ENCODE measurements at regions of chr15 and their contacts with region 1.

Region 1: GRCh38 chr15:44663409-44664308 is at the start of gene SPG11:
- DNase-seq: peak; percentile 99
- H3K4me3 ChIP-seq: peak within 1 kb of the TSS; percentile 76 to 95 (median 86)
- H3K27ac ChIP-seq: peak within 1 kb of the TSS; percentile 73
- H3K4me1 ChIP-seq: peaks cover 9% of the 10 kb centered on the region
- H3K27me3 ChIP-seq: peaks cover 0 to 1% of the 10 kb centered on the region in 2 experiments
- CTCF ChIP-seq: peak; percentile 86 to 92
- POLR2A ChIP-seq: peak; percentile 97
- total RNA-seq, gene SPG11: 44.7 and 53.5 TPM in 2 replicates

Region 2: GRCh38 chr15:43991206-43991605 is 672.5 kb before region 1 on chr15:
- CTCF ChIA-PET with region 1: no interaction called
- POLR2A ChIA-PET with region 1: no interaction called
- dilution Hi-C with region 1: no loop called
- intact Hi-C with region 1: no loop called
- DNase-seq: no peak
- H3K4me3 ChIP-seq: no peak overlapping the region
- H3K27ac ChIP-seq: no peak overlapping the region
- H3K4me1 ChIP-seq: no peaks in the 10 kb centered on the region
- H3K27me3 ChIP-seq: no peaks in the 10 kb centered on the region
- CTCF ChIP-seq: no peak
- POLR2A ChIP-seq: no peak

Region 3: DNA sequence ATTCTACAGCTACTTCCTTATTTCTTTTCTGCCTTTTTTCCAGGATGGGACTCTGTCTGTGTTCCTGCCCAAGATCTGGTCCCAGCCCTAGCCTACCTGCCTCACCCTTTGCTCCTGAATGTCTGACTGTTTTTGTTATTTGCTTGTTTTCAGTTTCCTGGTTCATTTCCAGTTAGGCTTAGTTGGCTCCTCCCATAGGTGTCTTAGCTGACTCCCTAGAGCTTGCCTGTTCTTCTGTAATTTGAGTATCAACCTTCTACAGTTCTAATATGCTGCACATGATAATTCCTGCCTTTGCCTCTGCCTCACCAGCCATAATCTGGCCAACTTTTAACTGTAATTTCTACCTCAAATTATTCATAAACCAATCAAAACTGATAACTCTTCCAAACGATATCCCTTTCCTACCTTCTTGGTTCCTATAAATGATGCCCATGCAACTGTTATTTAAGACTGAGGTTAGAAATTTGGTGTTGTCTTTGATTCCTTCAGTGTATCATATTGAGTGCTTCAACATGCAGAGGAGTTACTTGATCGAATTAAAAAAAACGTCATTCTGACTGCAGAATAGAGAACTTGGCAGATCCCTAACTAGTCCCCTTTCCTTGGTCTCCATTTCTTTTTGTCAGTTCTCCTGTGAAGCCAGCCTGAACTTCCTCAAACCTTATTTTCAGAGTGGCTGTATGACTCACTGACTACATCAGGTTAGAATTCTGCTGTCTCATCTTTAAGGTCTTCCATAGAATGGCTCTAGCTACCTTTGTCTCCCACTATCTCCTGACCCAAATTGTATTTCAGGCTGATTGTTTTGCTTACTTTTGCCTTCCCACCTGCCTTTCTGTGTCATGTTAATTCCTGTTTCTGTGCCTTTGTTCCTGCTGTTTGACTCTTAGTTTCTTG is 366.8 kb before region 1 on chr15:
- CTCF ChIA-PET with region 1: no interaction called
- POLR2A ChIA-PET with region 1: no interaction called
- dilution Hi-C with region 1: no loop called
- intact Hi-C with region 1: no loop called
- DNase-seq: peak; percentile 18
- H3K4me3 ChIP-seq: no peak overlapping the region
- H3K27ac ChIP-seq: no peak overlapping the region
- H3K4me1 ChIP-seq: peaks cover 5% of the 10 kb centered on the region
- H3K27me3 ChIP-seq: no peaks in the 10 kb centered on the region
- CTCF ChIP-seq: no peak
- POLR2A ChIP-seq: no peak

Region 4: GRCh38 chr15:44584162-44584749 is 79.4 kb before region 1 on chr15:
- CTCF ChIA-PET with region 1: interaction called, 3 read pairs
- POLR2A ChIA-PET with region 1: no interaction called
- dilution Hi-C with region 1: no loop called
- intact Hi-C with region 1: loop called (anchors 2 kb)
- DNase-seq: peak; percentile 49
- H3K4me3 ChIP-seq: no peak overlapping the region
- H3K27ac ChIP-seq: no peak overlapping the region
- H3K4me1 ChIP-seq: no peaks in the 10 kb centered on the region
- H3K27me3 ChIP-seq: no peaks in the 10 kb centered on the region
- CTCF ChIP-seq: peak; percentile 52 to 72
- POLR2A ChIP-seq: no peak

Region 5: GRCh38 chr15:44647036-44647435 is 16.6 kb before region 1 on chr15:
- CTCF ChIA-PET with region 1: interaction called, 10 read pairs
- POLR2A ChIA-PET with region 1: no interaction called
- dilution Hi-C with region 1: no loop called
- intact Hi-C with region 1: no loop called
- DNase-seq: no peak
- H3K4me3 ChIP-seq: no peak overlapping the region
- H3K27ac ChIP-seq: no peak overlapping the region
- H3K4me1 ChIP-seq: no peaks in the 10 kb centered on the region
- H3K27me3 ChIP-seq: no peaks in the 10 kb centered on the region
- CTCF ChIP-seq: no peak
- POLR2A ChIP-seq: no peak

Region 6: DNA sequence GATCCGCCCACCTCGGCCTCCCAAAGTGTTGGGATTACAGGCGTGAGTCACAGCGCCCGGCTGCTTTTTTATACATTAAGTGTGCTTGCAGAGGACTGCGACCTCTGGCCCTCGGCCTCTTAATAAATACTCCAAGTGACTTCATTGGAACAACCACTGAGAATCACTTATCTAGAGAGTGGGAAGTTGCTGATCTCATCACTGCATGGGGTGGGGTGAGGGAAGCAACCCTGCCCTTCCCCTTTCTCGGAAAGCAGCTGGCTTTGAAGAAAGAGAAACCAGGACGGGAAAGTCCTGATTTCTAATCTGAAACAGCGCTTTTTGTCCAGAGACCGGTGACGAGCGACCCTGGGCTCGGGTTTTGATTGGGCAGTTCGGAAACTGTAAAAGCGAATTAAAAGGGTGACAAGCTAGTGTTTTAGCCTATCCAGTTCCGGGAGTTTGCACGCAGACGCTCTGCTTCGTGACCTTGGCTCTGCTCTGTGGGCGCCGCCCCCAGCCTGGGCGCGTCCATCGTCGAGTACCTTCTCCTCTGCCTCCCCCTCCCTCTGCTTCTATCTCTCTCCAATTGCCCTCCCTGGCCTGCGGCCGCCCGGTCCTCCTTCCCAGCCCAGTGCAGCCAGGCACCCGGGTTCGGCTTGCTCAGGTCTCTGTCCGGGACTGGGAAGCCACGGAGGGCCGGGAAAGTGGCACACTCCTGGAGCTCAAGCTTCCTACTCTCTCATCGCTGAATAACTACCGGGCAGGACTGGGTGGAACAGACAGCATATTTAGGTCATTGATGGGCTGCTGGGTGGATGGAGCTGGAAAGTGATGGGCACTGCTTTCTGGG is 65.1 kb after region 1 on chr15:
- CTCF ChIA-PET with region 1: interaction called, 29 read pairs
- POLR2A ChIA-PET with region 1: interaction called, 8 read pairs
- dilution Hi-C with region 1: no loop called
- intact Hi-C with region 1: loop called (anchors 1 kb)
- DNase-seq: peak; percentile 99
- H3K4me3 ChIP-seq: peak overlapping the region; percentile 60 to 75 (median 69)
- H3K27ac ChIP-seq: peak overlapping the region; percentile 71
- H3K4me1 ChIP-seq: peaks cover 32% of the 10 kb centered on the region
- H3K27me3 ChIP-seq: no peaks in the 10 kb centered on the region
- CTCF ChIP-seq: no peak
- POLR2A ChIP-seq: peak; percentile 71

Region 7: DNA sequence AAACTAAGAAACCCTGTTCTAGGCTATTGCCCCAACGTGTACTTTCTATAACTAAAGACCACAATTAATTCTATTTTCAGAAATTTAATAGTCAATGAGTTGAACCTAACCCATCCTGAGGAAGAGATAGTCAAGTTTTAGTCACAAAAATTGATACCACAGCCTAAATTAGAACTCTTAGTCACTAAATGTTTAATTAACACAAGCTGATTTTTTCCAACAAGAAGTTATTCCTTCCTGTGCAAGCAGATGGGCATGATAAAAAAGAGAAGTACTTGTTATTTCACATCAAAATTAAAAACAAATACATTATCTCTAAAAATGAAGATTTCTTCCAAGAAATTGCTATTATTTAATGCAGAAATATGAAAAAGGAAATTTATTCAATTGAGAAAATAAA is 254.5 kb after region 1 on chr15:
- CTCF ChIA-PET with region 1: interaction called, 8 read pairs
- POLR2A ChIA-PET with region 1: no interaction called
- dilution Hi-C with region 1: no loop called
- intact Hi-C with region 1: loop called (anchors 10 kb)
- DNase-seq: no peak
- H3K4me3 ChIP-seq: no peak overlapping the region
- H3K27ac ChIP-seq: no peak overlapping the region
- H3K4me1 ChIP-seq: no peaks in the 10 kb centered on the region
- H3K27me3 ChIP-seq: no peaks in the 10 kb centered on the region
- CTCF ChIP-seq: no peak
- POLR2A ChIP-seq: no peak

Measured in endothelial cell of umbilical vein (primary cell).